ENCODE measurements at regions of chr20 and their contacts with region 1.

Region 1: GRCh38 chr20:35303735-35304491 is 11.7 kb upstream of the FAM83C start:
- DNase-seq: no peak
- H3K4me3 ChIP-seq: no peak overlapping the region
- H3K27ac ChIP-seq: peak overlapping the region; percentile 93
- H3K27me3 ChIP-seq: no peaks in the 10 kb centered on the region
- CTCF ChIP-seq: peak; percentile 94

Region 2: GRCh38 chr20:34983995-34984735 is 319.7 kb before region 1 on chr20:
- CTCF ChIA-PET with region 1: no interaction called
- POLR2A ChIA-PET with region 1: no interaction called
- DNase-seq: no peak
- H3K4me3 ChIP-seq: no peak overlapping the region
- H3K27ac ChIP-seq: no peak overlapping the region
- H3K27me3 ChIP-seq: peaks cover 16% of the 10 kb centered on the region
- CTCF ChIP-seq: no peak

Region 3: DNA sequence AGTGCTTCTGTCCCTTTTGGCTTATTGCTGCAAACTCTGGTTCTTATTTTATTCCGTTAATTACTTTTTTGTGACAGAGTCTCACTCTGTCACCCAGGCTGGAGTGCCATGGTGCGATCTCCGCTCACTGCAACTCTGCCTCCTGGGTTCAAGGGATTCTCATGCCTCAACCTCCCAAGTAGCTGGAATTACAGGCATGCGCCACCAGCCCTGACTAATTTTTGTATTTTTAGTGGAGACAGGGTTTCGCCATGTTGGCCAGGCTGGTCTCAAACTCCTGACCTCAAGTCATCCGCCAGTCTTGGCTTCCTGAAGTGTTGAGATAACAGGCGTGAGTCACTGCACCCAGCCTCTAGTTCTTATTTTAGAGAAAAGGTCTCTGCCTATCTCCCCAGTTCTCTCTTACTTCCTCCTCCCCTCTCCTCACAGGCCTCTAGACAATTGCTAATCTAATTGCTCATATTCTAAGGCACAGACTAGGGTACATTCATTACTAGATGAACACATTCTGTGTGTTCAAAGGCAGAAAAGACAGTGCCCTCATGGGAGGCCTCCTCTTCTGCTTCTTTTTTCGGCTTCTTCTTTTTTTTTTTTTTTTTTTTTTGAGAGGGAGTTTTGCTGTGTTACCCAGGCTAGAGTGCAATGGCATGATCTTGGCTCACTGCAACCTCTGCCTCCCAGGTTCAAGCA is 183.8 kb before region 1 on chr20:
- CTCF ChIA-PET with region 1: no interaction called
- POLR2A ChIA-PET with region 1: no interaction called
- DNase-seq: peak; percentile 32
- H3K4me3 ChIP-seq: no peak overlapping the region
- H3K27ac ChIP-seq: no peak overlapping the region
- H3K27me3 ChIP-seq: no peaks in the 10 kb centered on the region
- CTCF ChIP-seq: no peak

Region 4: GRCh38 chr20:35318502-35319157 is 14.7 kb after region 1 on chr20:
- CTCF ChIA-PET with region 1: interaction called, 17 read pairs
- POLR2A ChIA-PET with region 1: interaction called, 12 read pairs
- DNase-seq: no peak
- H3K4me3 ChIP-seq: no peak overlapping the region
- H3K27ac ChIP-seq: peak overlapping the region; percentile 93
- H3K27me3 ChIP-seq: no peaks in the 10 kb centered on the region
- CTCF ChIP-seq: no peak

Region 5: GRCh38 chr20:35395728-35396127 is 91.8 kb after region 1 on chr20:
- CTCF ChIA-PET with region 1: interaction called, 5 read pairs
- POLR2A ChIA-PET with region 1: interaction called, 17 read pairs
- DNase-seq: no peak
- H3K4me3 ChIP-seq: no peak overlapping the region
- H3K27ac ChIP-seq: peak overlapping the region; percentile 39
- H3K27me3 ChIP-seq: no peaks in the 10 kb centered on the region
- CTCF ChIP-seq: peak; percentile 32; the same call in 1 of the 2 replicates

Region 6: GRCh38 chr20:35447082-35447789 is 143.3 kb after region 1 on chr20:
- CTCF ChIA-PET with region 1: interaction called, 120 read pairs
- POLR2A ChIA-PET with region 1: interaction called, 5 read pairs
- DNase-seq: no peak
- H3K4me3 ChIP-seq: peak overlapping the region; percentile 25; the same call in 1 of the 2 replicates
- H3K27ac ChIP-seq: no peak overlapping the region
- H3K27me3 ChIP-seq: no peaks in the 10 kb centered on the region
- CTCF ChIP-seq: peak; percentile 98